Posterior vena cava (tissue), 2 donors: ENCODE measurements at regions of chr9 and their contacts with region 1.

Region 1: DNA sequence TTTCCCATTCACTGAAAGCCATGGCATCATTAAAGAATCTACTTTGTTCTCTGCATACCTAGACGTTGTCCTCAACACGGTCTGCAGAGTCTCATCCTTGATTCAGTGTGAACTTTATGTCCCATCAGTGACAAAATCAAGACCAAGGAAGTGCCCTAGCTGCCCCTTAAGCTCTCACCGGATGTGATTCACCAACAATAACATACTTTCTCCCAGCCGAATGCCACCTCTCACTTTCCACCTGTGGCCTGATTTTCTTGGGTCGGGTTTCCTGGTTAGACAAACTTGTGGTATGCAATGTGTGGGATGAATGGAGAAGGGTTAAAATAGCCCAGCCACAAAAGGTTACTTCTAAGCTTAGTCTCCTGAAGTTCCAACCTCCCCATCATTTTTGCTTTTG is 145.3 kb upstream of the PAPPA start:
- DNase-seq: no peak

Region 2: GRCh38 chr9:115444959-115445358 is 563.3 kb before region 1 on chr9:
- intact Hi-C with region 1: loop called in 1 of 2 experiments (anchors 5 kb)
- DNase-seq: no peak

Region 3: GRCh38 chr9:115524453-115525059 is 483.7 kb before region 1 on chr9:
- intact Hi-C with region 1: no loop called
- DNase-seq: no peak

Region 4: GRCh38 chr9:115775659-115776058 is 232.6 kb before region 1 on chr9:
- intact Hi-C with region 1: no loop called
- DNase-seq: no peak